ENCODE measurements at regions of chr10 and their contacts with region 1.

Region 1: GRCh38 chr10:72260588-72261322 is 13.0 kb upstream of the DDIT4 start:
- DNase-seq: peak; percentile 96
- H3K4me3 Mint-ChIP-seq: peak overlapping the region; percentile 85
- H3K27ac Mint-ChIP-seq: peak overlapping the region; percentile 98
- H3K4me1 Mint-ChIP-seq: peaks cover 50% of the 10 kb centered on the region
- H3K27me3 Mint-ChIP-seq: no peaks in the 10 kb centered on the region

Region 2: DNA sequence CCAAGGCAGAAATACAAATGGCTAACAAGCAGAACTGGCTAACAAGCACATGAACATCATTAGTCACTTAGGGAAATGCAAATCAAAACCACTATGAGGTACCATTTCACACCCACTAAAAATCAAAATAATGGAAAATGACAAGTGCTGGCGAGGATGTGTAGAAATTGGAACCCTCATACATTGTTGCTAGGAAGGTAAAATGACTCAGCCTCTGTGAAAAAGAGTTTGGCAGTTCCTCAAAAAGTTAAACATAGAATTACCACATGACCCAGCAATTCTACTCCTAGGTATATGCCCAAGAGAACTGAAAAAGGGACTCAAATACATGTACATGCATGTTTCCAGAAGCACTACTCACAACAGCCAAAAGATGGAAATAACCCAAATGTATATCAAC is 97.8 kb before region 1 on chr10:
- intact Hi-C with region 1: loop called (anchors 2 kb)
- DNase-seq: peak; percentile 59
- H3K4me3 Mint-ChIP-seq: peak overlapping the region; percentile 10
- H3K27ac Mint-ChIP-seq: peak overlapping the region; percentile 88
- H3K4me1 Mint-ChIP-seq: peaks cover 12% of the 10 kb centered on the region
- H3K27me3 Mint-ChIP-seq: no peaks in the 10 kb centered on the region

Region 3: GRCh38 chr10:72248468-72249151 is 12.1 kb before region 1 on chr10:
- intact Hi-C with region 1: loop called (anchors 1 kb)
- DNase-seq: peak; percentile 94
- H3K4me3 Mint-ChIP-seq: peak overlapping the region; percentile 82
- H3K27ac Mint-ChIP-seq: peak overlapping the region; percentile 96
- H3K4me1 Mint-ChIP-seq: peaks cover 65% of the 10 kb centered on the region
- H3K27me3 Mint-ChIP-seq: no peaks in the 10 kb centered on the region

Region 4: GRCh38 chr10:72319416-72320254 is 58.9 kb after region 1 on chr10:
- intact Hi-C with region 1: loop called (anchors 1 kb)
- DNase-seq: peak; percentile 96
- H3K4me3 Mint-ChIP-seq: peak overlapping the region; percentile 85
- H3K27ac Mint-ChIP-seq: peak overlapping the region; percentile 99
- H3K4me1 Mint-ChIP-seq: peaks cover 61% of the 10 kb centered on the region
- H3K27me3 Mint-ChIP-seq: no peaks in the 10 kb centered on the region

Region 5: GRCh38 chr10:72342911-72343310 is 82.2 kb after region 1 on chr10:
- intact Hi-C with region 1: no loop called
- DNase-seq: no peak
- H3K4me3 Mint-ChIP-seq: no peak overlapping the region
- H3K27ac Mint-ChIP-seq: no peak overlapping the region
- H3K4me1 Mint-ChIP-seq: peaks cover 9% of the 10 kb centered on the region
- H3K27me3 Mint-ChIP-seq: no peaks in the 10 kb centered on the region

Region 6: GRCh38 chr10:73167783-73168464 is 907.2 kb after region 1 on chr10 and contains the starts of genes ECD and FAM149B1:
- intact Hi-C with region 1: loop called (anchors 5 kb)
- DNase-seq: peak; percentile 98
- H3K4me3 Mint-ChIP-seq: peak within 1 kb of the TSS; percentile 97
- H3K27ac Mint-ChIP-seq: peak within 1 kb of the TSS; percentile 99
- H3K4me1 Mint-ChIP-seq: peaks cover 35% of the 10 kb centered on the region
- H3K27me3 Mint-ChIP-seq: no peaks in the 10 kb centered on the region
- total RNA-seq, gene ECD: 38.5 and 40.7 TPM in 2 replicates
- total RNA-seq, gene FAM149B1: 10.5 and 11.5 TPM in 2 replicates